Dorsolateral prefrontal cortex (tissue), 120 donors: ENCODE measurements at regions of chr16 and their contacts with region 1.

Region 1: GRCh38 chr16:68448360-68448970 is at the start of gene SMPD3:
- DNase-seq: peak; percentile 98 to 100 (median 100)
- H3K4me3 ChIP-seq: peak within 1 kb of the TSS; percentile 47 to 95 (median 75)
- H3K27ac ChIP-seq: peak within 1 kb of the TSS in 46 of 59 donors; percentile 22 to 76 (median 60)
- H3K27me3 ChIP-seq: peaks cover 0 to 19% (median 0%) of the 10 kb centered on the region in 45 donors
- CTCF ChIP-seq: peak in 40 of 56 donors; percentile 6 to 68 (median 38)
- total RNA-seq, gene SMPD3: 5.3 to 40.7 (median 21.2) TPM

Region 2: DNA sequence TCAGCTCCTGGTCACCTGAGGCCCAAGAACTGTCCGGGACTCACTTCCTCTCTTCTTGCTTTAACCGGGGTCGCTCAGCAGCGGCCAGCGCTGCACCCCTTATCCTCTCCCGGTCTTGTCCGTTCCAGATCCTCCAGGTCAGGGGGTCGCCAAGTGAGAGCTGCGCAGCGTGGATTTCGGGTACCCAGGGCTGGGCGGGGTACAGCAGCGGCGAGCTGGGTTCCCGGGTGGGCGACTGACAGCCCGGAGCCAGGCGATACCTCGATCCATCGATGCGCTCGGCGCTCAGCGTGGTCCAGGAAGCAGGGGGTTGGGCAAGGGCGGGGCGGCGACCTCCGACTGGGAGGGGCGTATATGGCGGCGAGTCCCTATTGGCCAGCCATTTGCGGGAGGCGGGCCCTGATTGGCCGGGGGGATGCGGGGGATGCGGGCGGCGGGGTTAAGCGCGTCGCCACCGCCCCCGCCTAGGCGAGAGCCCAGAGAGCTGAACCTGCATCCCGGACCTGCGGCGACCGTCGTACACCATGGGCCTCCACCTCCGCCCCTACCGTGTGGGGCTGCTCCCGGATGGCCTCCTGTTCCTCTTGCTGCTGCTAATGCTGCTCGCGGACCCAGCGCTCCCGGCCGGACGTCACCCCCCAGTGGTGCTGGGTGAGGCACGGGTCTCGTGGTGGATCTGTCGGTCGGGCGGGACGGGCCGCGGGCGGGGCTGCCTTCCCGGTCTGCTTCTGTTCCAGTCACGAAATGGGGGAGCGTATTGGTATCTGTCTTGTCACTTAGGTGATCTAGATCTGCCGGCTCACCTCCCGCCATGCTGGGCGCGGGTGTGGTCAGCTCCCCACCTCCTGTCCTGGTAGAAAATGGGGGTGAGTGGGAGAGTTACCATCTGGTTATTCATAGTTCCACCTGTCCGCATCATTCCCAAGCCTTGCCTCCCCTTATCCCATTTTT is 203.3 kb before region 1 on chr16 and contains the start of gene PLA2G15:
- intact Hi-C with region 1: loop called in 1 of 2 experiments (anchors 10 kb)
- DNase-seq: peak; percentile 92 to 98 (median 95)
- H3K4me3 ChIP-seq: peak within 1 kb of the TSS; percentile 70 to 100 (median 94)
- H3K27ac ChIP-seq: peak within 1 kb of the TSS in 52 of 59 donors; percentile 4 to 91 (median 66)
- H3K27me3 ChIP-seq: no peaks in the 10 kb centered on the region
- CTCF ChIP-seq: peak in 24 of 56 donors; percentile 4 to 50 (median 19)
- total RNA-seq, gene PLA2G15: 13.4 to 34.2 (median 20.2) TPM

Region 3: DNA sequence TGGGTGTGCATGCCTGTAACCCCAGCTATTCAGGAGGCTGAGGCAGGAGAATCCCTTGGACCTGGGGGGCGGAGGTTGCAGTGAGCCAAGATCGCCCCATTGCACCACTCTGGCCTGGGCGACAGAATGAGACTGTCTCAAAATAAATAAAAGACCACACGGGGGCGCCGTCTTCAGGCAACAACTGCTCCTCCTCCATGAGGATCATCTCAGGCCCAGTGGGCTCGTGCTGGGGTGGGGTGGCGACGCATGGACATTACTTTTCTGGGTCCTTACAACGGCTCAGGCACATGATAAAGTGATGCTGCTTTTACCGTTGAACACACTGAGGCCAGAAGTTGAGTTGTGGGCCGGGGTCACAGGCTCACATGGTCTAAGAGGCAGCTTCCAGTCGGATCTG is 81.4 kb before region 1 on chr16:
- intact Hi-C with region 1: loop called (anchors 2 to 5 kb)
- DNase-seq: peak in 2 of 10 donors; percentile 41 to 71
- H3K4me3 ChIP-seq: no peak overlapping the region
- H3K27ac ChIP-seq: no peak overlapping the region
- H3K27me3 ChIP-seq: no peaks in the 10 kb centered on the region
- CTCF ChIP-seq: peak in 52 of 56 donors; percentile 10 to 61 (median 46)

Region 4: GRCh38 chr16:68506331-68507053 is 58.0 kb after region 1 on chr16:
- intact Hi-C with region 1: loop called (anchors 5 kb)
- DNase-seq: peak in 4 of 10 donors; percentile 6 to 43 (median 26)
- H3K4me3 ChIP-seq: no peak overlapping the region
- H3K27ac ChIP-seq: peak overlapping the region in 2 of 59 donors; percentile 8 to 36
- H3K27me3 ChIP-seq: no peaks in the 10 kb centered on the region
- CTCF ChIP-seq: no peak